ENCODE measurements at regions of chr2 and their contacts with region 1.

Region 1: DNA sequence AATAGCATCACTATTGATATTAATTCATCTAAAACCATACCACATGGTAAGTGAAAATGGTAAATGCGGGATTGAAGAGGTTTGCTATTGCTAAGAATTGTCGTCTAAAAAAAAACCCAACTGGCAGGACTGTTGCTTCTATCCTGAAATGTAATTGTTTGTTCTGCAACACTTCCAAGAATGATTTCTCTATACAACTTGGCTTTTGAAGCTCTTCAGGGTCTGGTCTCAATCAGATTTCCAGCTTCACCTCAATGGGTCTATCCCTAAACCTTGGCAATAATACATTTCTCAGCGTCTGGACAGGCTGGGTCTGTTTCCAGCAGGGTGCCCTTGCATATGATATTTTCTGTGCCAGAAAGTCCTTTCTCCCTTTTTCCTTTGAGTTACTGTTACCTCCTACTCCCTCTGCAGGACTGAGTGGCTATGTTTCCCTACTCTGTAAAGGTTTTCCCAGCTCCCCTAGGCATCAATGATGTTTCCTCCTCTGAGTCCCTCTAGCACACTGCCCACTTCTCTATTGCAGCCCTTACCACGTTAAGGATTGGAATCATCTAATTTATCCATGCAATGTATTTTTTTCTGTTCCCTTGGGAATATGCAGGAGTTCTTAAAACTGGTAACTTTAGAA is 118.2 kb upstream of the REV1 start:
- DNase-seq: no peak
- ATAC-seq: no peak
- H3K4me3 ChIP-seq: no peak overlapping the region
- H3K27ac ChIP-seq: no peak overlapping the region
- H3K4me1 ChIP-seq: peaks cover 14% of the 10 kb centered on the region
- H3K27me3 ChIP-seq: no peaks in the 10 kb centered on the region
- CTCF ChIP-seq: no peak
- POLR2A ChIP-seq: no peak
- RAD21 ChIP-seq: no peak

Region 2: GRCh38 chr2:99317166-99317872 is 290.7 kb before region 1 on chr2:
- CTCF ChIA-PET with region 1: no interaction called
- POLR2A ChIA-PET with region 1: no interaction called
- dilution Hi-C with region 1: no loop called
- in situ Hi-C with region 1: no loop called
- intact Hi-C with region 1: no loop called
- DNase-seq: no peak
- ATAC-seq: no peak
- H3K4me3 ChIP-seq: no peak overlapping the region
- H3K27ac ChIP-seq: no peak overlapping the region
- H3K4me1 ChIP-seq: no peaks in the 10 kb centered on the region
- H3K27me3 ChIP-seq: no peaks in the 10 kb centered on the region
- CTCF ChIP-seq: no peak
- POLR2A ChIP-seq: no peak
- RAD21 ChIP-seq: no peak

Region 3: DNA sequence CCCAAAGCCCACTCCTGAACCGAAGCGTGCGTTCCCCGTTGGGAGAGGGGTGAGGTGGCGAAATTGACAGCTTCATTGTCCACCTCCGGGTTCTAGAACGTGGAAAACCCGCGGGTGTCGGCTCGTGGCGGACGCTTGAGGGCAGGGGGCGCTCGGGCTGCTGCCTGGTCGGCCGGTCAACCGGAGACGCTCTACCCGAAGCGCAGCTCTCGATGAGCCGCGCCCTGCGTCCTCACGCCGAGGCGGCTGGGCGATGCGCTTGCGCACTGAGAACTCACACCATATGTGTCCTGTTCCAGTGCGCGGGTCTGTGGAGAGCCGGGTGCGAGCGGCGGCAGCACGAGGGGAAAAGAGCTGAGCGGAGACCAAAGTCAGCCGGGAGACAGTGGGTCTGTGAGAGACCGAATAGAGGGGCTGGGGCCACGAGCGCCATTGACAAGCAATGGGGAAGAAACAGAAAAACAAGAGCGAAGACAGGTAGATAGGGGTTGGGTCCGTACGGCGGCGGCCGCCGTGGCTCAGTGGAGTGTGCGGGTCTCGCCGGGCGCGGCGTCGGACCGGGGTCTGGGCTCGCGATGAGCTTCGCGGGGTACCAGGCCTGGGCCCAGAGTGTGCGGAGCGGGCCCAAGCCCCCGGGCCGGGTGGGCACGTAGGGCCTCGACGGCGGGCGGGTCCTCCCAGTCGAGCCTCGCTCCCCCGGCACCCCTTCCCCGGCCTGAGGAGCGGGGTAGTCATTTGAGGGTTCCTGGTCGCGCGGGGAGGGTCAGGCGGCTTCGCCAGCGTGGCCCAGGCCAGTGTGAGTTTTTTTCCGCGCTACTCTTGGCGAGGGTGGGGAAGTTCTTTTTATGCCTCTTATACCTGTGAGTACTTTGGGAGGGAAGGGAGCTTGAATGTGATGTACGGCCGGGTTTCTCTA is 270.6 kb before region 1 on chr2 and contains the start of gene EIF5B:
- CTCF ChIA-PET with region 1: no interaction called
- POLR2A ChIA-PET with region 1: no interaction called
- dilution Hi-C with region 1: no loop called
- in situ Hi-C with region 1: no loop called
- intact Hi-C with region 1: no loop called
- DNase-seq: peak; percentile 95
- ATAC-seq: peak; percentile 86
- H3K4me3 ChIP-seq: peak within 1 kb of the TSS; percentile 69
- H3K27ac ChIP-seq: peak within 1 kb of the TSS; percentile 75
- H3K4me1 ChIP-seq: no peaks in the 10 kb centered on the region
- H3K27me3 ChIP-seq: no peaks in the 10 kb centered on the region
- CTCF ChIP-seq: peak; percentile 73
- POLR2A ChIP-seq: peak; percentile 40; the same call in 1 of the 2 replicates
- RAD21 ChIP-seq: peak; percentile 37
- total RNA-seq, gene EIF5B: 19.7 and 26.9 TPM in 2 replicates

Region 4: GRCh38 chr2:99648178-99648844 is 40.3 kb after region 1 on chr2:
- CTCF ChIA-PET with region 1: no interaction called
- POLR2A ChIA-PET with region 1: no interaction called
- dilution Hi-C with region 1: no loop called
- in situ Hi-C with region 1: no loop called
- intact Hi-C with region 1: loop called (anchors 5 kb)
- DNase-seq: peak; percentile 86
- ATAC-seq: peak; percentile 53
- H3K4me3 ChIP-seq: no peak overlapping the region
- H3K27ac ChIP-seq: peak overlapping the region; percentile 96
- H3K4me1 ChIP-seq: peaks cover 26% of the 10 kb centered on the region
- H3K27me3 ChIP-seq: no peaks in the 10 kb centered on the region
- CTCF ChIP-seq: no peak
- POLR2A ChIP-seq: no peak
- RAD21 ChIP-seq: no peak

Region 5: DNA sequence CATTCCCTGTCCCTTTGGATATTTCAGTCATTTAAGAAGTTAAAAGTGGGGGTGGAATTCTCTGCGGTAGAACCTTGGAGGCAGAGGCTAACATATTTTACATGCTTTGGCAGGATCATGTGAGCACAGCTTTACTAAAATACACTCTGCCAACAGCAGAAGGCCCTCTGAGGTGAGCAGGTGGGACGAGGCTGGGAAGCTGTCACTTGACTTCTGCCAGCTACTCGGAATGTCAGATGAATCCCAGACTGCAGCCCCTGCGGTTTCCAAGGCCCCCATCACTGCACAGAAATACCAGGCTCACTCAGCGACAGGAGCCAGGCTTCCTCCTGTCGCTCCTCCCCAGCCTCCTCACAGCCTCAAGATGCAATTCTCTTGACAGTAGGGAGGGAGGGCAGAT is 102.7 kb after region 1 on chr2:
- CTCF ChIA-PET with region 1: no interaction called
- POLR2A ChIA-PET with region 1: no interaction called
- dilution Hi-C with region 1: no loop called
- in situ Hi-C with region 1: no loop called
- intact Hi-C with region 1: loop called (anchors 5 kb)
- DNase-seq: no peak
- ATAC-seq: peak; percentile 33
- H3K4me3 ChIP-seq: no peak overlapping the region
- H3K27ac ChIP-seq: peak overlapping the region; percentile 32; the same call in 1 of the 2 replicates
- H3K4me1 ChIP-seq: peaks cover 14% of the 10 kb centered on the region
- H3K27me3 ChIP-seq: no peaks in the 10 kb centered on the region
- CTCF ChIP-seq: no peak
- POLR2A ChIP-seq: no peak
- RAD21 ChIP-seq: no peak

Region 6: DNA sequence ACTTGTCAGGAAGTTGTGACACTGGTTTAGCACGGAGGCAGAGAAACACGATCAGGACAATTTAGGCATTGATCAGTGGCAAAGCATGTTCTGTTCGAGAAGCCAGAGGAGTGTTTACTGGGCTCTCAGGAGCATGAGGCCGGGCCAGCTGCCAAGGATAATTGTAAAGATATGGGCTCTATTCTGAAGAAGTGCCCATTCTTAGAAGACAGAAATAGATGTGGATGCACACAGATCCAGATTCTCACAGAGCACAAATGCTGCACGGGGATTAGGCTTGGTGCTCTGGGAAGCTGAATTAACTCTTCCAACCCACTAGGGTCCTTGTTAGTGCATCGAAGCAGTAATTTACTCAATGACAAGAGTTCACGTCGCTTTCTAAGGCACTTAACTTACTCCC is 518.2 kb after region 1 on chr2:
- CTCF ChIA-PET with region 1: no interaction called
- POLR2A ChIA-PET with region 1: no interaction called
- dilution Hi-C with region 1: no loop called
- in situ Hi-C with region 1: no loop called
- intact Hi-C with region 1: no loop called
- DNase-seq: peak; percentile 7
- ATAC-seq: peak; percentile 21; the same call in 1 of the 2 replicates
- H3K4me3 ChIP-seq: no peak overlapping the region
- H3K27ac ChIP-seq: no peak overlapping the region
- H3K4me1 ChIP-seq: no peaks in the 10 kb centered on the region
- H3K27me3 ChIP-seq: no peaks in the 10 kb centered on the region
- CTCF ChIP-seq: no peak
- POLR2A ChIP-seq: no peak
- RAD21 ChIP-seq: no peak

Measured in IMR-90 (cell line).